ENCODE measurements at regions of chr11 and their contacts with region 1.

Region 1: DNA sequence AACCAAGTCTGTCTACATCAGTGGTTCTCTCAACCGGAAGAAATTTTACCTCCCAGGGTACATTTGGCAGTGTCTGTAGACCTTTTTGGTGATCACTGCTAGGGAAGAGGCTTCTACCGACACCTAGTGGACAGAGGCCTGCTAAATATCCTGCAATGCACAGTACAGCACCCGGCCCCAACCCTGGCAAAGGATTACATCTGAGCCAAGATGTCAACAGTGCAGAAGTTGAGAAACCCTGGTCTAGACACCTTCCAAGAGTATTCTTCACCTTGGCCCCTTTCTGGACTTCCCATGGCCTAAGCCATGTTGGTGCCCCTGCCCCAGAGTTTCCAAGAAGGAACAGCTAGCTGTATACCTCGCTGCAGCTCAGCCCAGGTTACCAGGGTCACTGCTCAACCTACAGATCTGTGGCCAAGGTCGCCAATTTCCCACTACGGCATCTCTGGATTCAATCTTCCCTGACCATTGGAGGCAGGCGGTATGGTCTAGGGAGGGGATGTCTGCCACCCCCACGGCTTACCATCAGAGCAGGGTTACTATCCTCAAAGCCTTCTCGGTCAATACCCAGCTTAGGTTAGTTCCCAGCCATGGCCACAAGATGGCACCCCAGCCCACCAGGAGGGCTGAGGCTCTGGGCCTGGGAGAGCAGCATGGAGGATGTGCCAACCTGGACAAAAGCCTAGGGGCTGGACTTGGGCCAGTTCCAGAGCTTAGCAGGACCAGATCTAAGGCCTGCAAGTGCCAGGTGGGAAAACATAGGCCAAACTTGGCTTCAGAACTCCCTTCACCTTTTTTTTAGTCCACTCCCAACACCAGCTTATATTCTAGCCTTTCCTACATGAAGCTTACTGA is 3.7 kb upstream of the KCNC1 start:
- DNase-seq: peak; percentile 58 to 95
- H3K4me3 ChIP-seq: no peak overlapping the region
- H3K27ac ChIP-seq: no peak overlapping the region
- H3K4me1 ChIP-seq: peaks cover 0 to 4% (median under 1%) of the 10 kb centered on the region in 4 experiments; a peak in 3 of 7 replicates
- H3K27me3 ChIP-seq: peaks cover 9 to 30% (median 24%) of the 10 kb centered on the region in 4 experiments
- CTCF ChIP-seq: peak; percentile 93 to 98 (median 94)
- EP300 ChIP-seq: no peak
- POLR2A ChIP-seq: no peak
- RAD21 ChIP-seq: peak; percentile 98

Region 2: DNA sequence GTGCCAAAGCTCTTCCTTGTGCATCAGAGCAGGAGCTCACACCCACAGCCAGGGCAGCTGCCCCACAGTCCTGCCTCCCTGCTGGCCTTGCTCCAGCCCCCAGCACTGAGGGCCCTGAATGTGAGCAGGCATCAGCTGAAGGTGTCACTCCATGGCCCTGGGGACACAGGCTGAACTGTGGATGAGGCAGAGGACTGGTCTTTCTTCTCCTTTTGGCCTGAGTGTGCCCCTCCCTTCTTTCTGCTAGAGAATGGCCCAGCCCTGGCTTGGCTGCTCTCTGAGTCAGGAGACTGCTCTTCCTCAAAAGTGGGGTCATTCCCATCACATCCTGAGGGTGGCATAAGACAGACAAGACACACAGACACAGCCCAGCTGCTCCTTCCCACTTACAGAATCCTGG is 167.6 kb before region 1 on chr11:
- CTCF ChIA-PET with region 1: interaction called, 12 read pairs
- POLR2A ChIA-PET with region 1: no interaction called
- DNase-seq: no peak
- H3K4me3 ChIP-seq: no peak overlapping the region
- H3K27ac ChIP-seq: no peak overlapping the region
- H3K4me1 ChIP-seq: no peaks in the 10 kb centered on the region
- H3K27me3 ChIP-seq: no peaks in the 10 kb centered on the region
- CTCF ChIP-seq: peak; percentile 12 to 56 (median 30)
- EP300 ChIP-seq: no peak
- POLR2A ChIP-seq: no peak
- RAD21 ChIP-seq: peak in 1 of 2 experiments; percentile 25; a peak in 1 of 4 replicates

Region 3: GRCh38 chr11:17695454-17696441 is 35.1 kb before region 1 on chr11:
- CTCF ChIA-PET with region 1: interaction called, 11 read pairs
- POLR2A ChIA-PET with region 1: no interaction called
- DNase-seq: peak in 1 of 2 experiments; percentile 54
- H3K4me3 ChIP-seq: peak overlapping the region; percentile 23 to 58 (median 32); a peak in 7 of 8 replicates
- H3K27ac ChIP-seq: no peak overlapping the region
- H3K4me1 ChIP-seq: no peaks in the 10 kb centered on the region; a peak in 2 of 7 replicates
- H3K27me3 ChIP-seq: peaks cover 5 to 33% (median 30%) of the 10 kb centered on the region in 4 experiments
- CTCF ChIP-seq: no peak
- EP300 ChIP-seq: no peak
- POLR2A ChIP-seq: no peak
- RAD21 ChIP-seq: no peak

Region 4: GRCh38 chr11:17770048-17770652 is 39.3 kb after region 1 on chr11:
- CTCF ChIA-PET with region 1: interaction called, 25 read pairs
- POLR2A ChIA-PET with region 1: no interaction called
- DNase-seq: no peak
- H3K4me3 ChIP-seq: no peak overlapping the region
- H3K27ac ChIP-seq: no peak overlapping the region
- H3K4me1 ChIP-seq: peaks cover 0 to 4% (median 0%) of the 10 kb centered on the region in 4 experiments; a peak in 2 of 7 replicates
- H3K27me3 ChIP-seq: no peaks in the 10 kb centered on the region
- CTCF ChIP-seq: peak; percentile 34 to 44 (median 43)
- EP300 ChIP-seq: no peak
- POLR2A ChIP-seq: no peak
- RAD21 ChIP-seq: peak; percentile 10 to 25; a peak in 1 of 4 replicates

Region 5: GRCh38 chr11:17839973-17840611 is 109.3 kb after region 1 on chr11:
- CTCF ChIA-PET with region 1: interaction called, 12 read pairs
- POLR2A ChIA-PET with region 1: no interaction called
- DNase-seq: no peak
- H3K4me3 ChIP-seq: no peak overlapping the region
- H3K27ac ChIP-seq: no peak overlapping the region
- H3K4me1 ChIP-seq: no peaks in the 10 kb centered on the region
- H3K27me3 ChIP-seq: no peaks in the 10 kb centered on the region
- CTCF ChIP-seq: no peak
- EP300 ChIP-seq: no peak
- POLR2A ChIP-seq: no peak
- RAD21 ChIP-seq: no peak

Region 6: GRCh38 chr11:17967661-17968060 is 236.8 kb after region 1 on chr11:
- CTCF ChIA-PET with region 1: interaction called, 276 read pairs
- POLR2A ChIA-PET with region 1: no interaction called
- DNase-seq: no peak
- H3K4me3 ChIP-seq: no peak overlapping the region
- H3K27ac ChIP-seq: no peak overlapping the region
- H3K4me1 ChIP-seq: no peaks in the 10 kb centered on the region
- H3K27me3 ChIP-seq: no peaks in the 10 kb centered on the region
- CTCF ChIP-seq: no peak
- EP300 ChIP-seq: no peak
- POLR2A ChIP-seq: no peak
- RAD21 ChIP-seq: no peak

Region 7: GRCh38 chr11:18036456-18036855 is 305.6 kb after region 1 on chr11:
- CTCF ChIA-PET with region 1: no interaction called
- POLR2A ChIA-PET with region 1: no interaction called
- DNase-seq: no peak
- H3K4me3 ChIP-seq: no peak overlapping the region
- H3K27ac ChIP-seq: no peak overlapping the region
- H3K4me1 ChIP-seq: no peaks in the 10 kb centered on the region
- H3K27me3 ChIP-seq: no peaks in the 10 kb centered on the region
- CTCF ChIP-seq: no peak
- EP300 ChIP-seq: no peak
- POLR2A ChIP-seq: no peak
- RAD21 ChIP-seq: no peak

Region 8: GRCh38 chr11:18081551-18081950 is 350.7 kb after region 1 on chr11:
- CTCF ChIA-PET with region 1: no interaction called
- POLR2A ChIA-PET with region 1: no interaction called
- DNase-seq: no peak
- H3K4me3 ChIP-seq: no peak overlapping the region
- H3K27ac ChIP-seq: no peak overlapping the region
- H3K4me1 ChIP-seq: no peaks in the 10 kb centered on the region
- H3K27me3 ChIP-seq: no peaks in the 10 kb centered on the region
- CTCF ChIP-seq: no peak
- EP300 ChIP-seq: no peak
- POLR2A ChIP-seq: no peak
- RAD21 ChIP-seq: no peak

Measured in H1 (cell line).